HEK293T (cell line): ENCODE measurements at regions of chr19 and their contacts with region 1.

Region 1: DNA sequence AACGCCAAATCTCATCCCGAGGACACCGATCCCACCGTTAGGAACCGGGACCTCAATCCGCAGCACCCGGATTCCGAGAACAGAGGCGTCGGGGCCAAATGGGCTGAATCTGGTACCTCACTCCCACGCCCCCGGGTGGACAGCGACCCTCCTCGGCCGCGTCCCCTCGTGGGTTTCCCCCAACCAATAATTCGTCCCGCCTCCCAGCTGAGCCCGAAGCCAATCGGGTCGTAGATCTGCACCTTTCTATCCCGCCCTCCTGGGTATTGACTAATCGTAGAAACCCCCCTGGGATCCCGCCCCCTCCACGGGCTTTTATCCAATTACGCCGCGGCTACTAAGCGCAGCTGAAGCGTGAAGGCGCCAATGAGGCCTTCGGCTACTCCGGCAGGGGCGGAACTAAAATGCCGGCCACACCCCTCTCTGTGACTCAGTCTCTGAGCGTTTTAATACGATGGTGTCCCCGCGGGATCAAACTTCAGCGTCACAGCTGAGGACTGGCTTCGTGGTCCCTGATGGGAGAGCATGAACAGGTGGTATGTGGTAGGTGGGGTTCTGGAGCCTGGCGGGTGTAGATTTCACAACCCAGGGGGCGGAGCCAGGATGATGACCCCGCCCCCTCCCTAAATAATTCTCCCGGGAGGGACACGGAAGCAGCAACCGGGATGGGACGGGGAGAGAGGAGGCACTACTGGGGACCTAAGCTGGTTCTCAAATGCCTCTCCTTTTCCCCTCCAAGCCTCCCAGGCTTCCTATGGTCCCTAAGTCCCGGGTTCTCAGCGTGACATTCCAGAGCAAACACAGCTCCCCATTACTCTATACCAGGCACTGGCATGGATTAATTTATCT is at the starts of genes CCDC159 and TMEM205:
- DNase-seq: peak; percentile 91

Region 2: GRCh38 chr19:11242864-11243797 is 103.2 kb before region 1 on chr19:
- CTCF ChIA-PET with region 1: no interaction called
- POLR2A ChIA-PET with region 1: no interaction called
- DNase-seq: peak; percentile 99

Region 3: GRCh38 chr19:11324079-11324661 is 22.1 kb before region 1 on chr19:
- CTCF ChIA-PET with region 1: interaction called, 4 read pairs
- POLR2A ChIA-PET with region 1: interaction called, 10 read pairs
- DNase-seq: peak; percentile 58

Region 4: DNA sequence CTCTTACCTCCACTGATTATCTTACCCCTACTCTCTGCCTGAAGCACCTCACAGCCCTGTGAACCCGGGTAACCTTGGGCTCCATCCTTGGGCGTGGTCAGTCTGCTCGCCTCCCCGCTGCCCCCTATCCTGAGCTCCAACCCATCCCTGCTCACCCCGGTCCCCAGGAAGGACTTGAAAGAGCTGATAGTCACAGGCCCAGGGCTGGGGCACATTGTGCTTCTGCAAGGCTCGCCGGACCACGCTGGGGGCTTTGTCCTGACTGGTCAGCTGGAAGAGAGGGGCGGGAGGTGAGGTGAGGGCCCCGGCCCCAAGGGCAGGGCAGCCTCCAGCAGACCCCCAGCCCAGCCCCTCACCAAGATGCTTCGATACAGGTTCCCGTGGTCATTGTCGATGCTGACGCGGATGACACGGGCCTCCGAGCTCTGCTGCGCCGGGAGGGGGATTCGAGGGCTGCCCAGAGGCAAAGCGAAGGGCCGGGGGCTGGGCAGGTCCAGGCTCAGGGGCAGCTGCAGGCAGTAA is 50.8 kb after region 1 on chr19:
- CTCF ChIA-PET with region 1: no interaction called
- POLR2A ChIA-PET with region 1: no interaction called
- DNase-seq: no peak